Thyroid gland (tissue), 4 donors: ENCODE measurements at regions of chrX and their contacts with region 1.

Region 1: DNA sequence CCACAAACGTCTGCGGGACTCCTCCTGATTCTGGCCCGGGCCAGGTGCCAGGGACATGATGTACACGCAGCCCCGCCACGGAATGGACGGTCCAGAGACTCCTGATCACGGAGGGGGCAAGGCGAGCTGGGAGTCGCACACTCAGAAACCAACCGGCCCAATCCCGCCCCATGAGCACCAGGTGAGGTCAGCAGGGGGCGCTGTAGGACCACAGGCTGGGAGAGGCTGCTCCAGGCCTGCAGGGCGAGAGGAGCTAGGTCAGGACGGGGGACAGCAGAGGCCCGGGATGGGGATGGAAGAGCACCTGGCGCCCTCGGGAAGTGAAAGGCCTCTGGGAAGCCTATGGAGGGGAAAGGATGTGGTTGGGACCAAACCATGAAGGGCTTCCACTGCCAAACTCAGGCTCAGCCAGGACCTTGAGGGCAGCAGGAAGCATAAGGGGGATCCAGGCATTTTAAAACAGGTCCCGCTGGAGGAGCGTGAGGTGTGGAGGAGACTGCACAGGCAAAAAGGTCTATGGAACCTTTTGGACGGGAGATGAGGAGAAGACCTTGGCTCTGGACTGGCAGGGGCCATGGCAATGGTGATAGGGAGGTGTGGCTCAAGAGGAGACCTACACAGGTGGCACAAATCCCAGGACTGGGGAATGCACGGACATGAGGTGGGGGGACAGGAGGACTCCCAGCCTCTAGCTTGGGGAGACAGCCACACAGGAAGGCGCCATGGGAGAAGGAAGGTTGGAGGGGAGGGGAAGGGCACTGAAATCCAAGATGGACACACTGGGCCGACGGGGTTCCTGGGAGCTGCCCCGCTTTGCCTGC is 79.2 kb downstream of the MTMR1 start:
- DNase-seq: peak; percentile 68 to 81
- H3K4me3 ChIP-seq: no peak overlapping the region
- H3K27ac ChIP-seq: no peak overlapping the region
- H3K4me1 ChIP-seq: peaks cover 0 to under 1% of the 10 kb centered on the region in 2 donors
- H3K27me3 ChIP-seq: no peaks in the 10 kb centered on the region
- CTCF ChIP-seq: peak; percentile 37 to 78 (median 72)
- POLR2A ChIP-seq: no peak

Region 2: DNA sequence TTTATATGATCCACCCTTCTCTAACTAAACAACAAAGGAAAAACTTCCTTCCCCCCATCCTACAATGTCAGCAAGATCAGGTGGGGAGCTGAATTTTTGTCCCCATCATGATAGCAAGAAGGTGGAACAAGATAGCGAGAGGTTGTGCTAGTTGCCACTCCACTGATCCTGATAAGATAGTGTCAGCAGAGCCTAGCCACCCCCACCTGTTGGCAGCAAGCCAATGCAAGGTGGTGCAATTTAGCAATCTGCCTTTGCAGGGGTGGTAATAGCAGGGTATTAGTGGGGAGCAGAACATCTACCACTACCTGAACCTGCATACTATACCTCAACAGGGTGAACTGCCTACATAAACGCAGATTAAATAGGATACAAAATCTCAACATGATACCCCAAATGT is 489.4 kb before region 1 on chrX:
- intact Hi-C with region 1: no loop called
- DNase-seq: no peak
- H3K4me3 ChIP-seq: no peak overlapping the region
- H3K27ac ChIP-seq: no peak overlapping the region
- H3K4me1 ChIP-seq: no peaks in the 10 kb centered on the region
- H3K27me3 ChIP-seq: peaks cover 3% of the 10 kb centered on the region
- CTCF ChIP-seq: no peak
- POLR2A ChIP-seq: no peak

Region 3: DNA sequence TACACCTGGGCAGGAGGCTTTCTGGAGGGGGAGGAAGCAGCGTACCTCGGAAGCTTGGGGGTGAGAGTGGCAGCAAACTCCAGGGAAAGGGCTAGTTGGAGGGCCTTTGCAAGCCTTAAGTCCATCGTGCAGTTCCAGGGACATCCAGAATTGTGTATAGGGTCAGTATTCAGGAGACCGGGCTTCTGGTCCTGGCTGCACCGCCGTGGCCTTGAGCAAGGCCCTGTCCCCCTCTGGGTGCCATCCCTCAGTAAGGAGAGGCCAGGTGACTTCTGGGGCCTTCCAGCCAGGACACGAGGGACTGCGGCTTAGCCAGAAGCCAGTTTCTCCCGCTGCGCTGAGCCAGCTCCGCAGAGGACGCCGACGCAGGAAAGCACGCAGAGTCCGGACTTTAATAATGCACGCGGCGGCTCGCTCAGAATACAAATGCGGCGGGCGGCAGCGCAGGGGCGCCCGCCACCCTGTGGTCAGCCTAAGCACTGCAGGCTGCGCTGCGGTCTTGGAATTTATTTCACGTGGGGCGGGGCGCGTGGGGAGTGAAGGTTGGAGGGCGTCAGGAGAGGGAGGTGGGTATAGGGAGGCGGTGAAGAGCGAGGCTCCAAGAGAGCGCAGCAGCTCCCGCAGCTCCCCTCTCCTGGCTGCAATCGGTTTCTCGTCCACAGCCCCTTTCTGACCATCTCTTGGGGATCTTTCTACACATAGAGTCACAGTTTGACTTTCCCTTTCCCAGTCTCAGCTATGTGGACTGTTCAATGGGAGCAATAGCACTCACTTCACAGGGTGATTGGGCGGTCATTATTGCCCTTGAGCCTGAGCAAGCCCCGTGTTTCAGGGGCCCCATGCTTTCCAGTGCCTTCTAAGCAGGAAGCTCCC is 310.0 kb after region 1 on chrX:
- intact Hi-C with region 1: loop called (anchors 5 kb)
- DNase-seq: peak; percentile 54 to 60
- H3K4me3 ChIP-seq: no peak overlapping the region
- H3K27ac ChIP-seq: no peak overlapping the region
- H3K4me1 ChIP-seq: no peaks in the 10 kb centered on the region
- H3K27me3 ChIP-seq: no peaks in the 10 kb centered on the region
- CTCF ChIP-seq: peak; percentile 71 to 93 (median 82)
- POLR2A ChIP-seq: no peak